OCI-LY7 (cell line): ENCODE measurements at regions of chr1 and their contacts with region 1.

Region 1: GRCh38 chr1:9247894-9248293 is 13.3 kb downstream of the H6PD start:
- DNase-seq: no peak
- H3K4me3 ChIP-seq: no peak overlapping the region
- H3K27ac ChIP-seq: no peak overlapping the region
- H3K4me1 ChIP-seq: no peaks in the 10 kb centered on the region
- CTCF ChIP-seq: no peak

Region 2: GRCh38 chr1:9260059-9260766 is 12.3 kb after region 1 on chr1:
- CTCF ChIA-PET with region 1: interaction called, 26 read pairs
- POLR2A ChIA-PET with region 1: no interaction called
- intact Hi-C with region 1: no loop called
- DNase-seq: no peak
- H3K4me3 ChIP-seq: no peak overlapping the region
- H3K27ac ChIP-seq: no peak overlapping the region
- H3K4me1 ChIP-seq: no peaks in the 10 kb centered on the region
- CTCF ChIP-seq: no peak